ENCODE measurements at regions of chr2 and their contacts with region 1.

Region 1: DNA sequence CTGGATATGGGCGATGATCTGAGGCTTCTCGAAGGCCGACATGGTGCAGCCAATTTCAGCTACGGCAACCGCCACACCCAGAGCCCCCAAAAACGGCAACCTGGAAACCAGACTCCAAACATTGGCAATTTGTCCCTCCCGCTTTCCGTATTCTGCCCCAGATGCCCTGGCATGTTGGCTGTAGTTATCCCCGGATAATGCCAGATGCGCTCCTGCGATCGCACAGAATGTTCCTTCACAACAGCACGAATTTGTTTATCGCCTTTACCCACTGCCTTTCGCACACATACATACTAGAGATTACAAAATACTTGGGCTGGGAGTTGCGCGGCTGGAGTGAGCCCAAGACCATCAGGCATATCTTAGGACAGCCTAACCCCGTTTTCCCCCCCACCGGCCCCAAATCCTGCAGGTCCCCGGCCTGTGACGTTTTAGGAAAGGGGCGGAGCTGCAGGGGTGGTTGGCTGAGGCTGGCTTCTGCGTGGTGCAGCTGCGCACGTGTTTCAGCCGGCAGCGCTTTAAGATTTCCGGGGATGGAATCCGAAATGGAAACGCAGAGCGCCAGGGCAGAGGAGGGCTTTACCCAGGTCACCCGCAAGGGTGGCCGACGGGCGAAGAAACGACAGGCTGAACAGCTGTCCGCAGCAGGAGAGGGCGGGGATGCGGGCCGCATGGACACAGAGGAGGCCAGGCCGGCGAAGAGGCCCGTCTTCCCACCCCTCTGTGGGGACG is at the start of gene PNO1:
- DNase-seq: peak; percentile 96
- H3K4me3 Mint-ChIP-seq: peak within 1 kb of the TSS; percentile 90
- H3K27ac Mint-ChIP-seq: peak within 1 kb of the TSS; percentile 100
- H3K4me1 Mint-ChIP-seq: peaks cover 37% of the 10 kb centered on the region
- H3K27me3 Mint-ChIP-seq: no peaks in the 10 kb centered on the region
- total RNA-seq, gene PNO1: 31.3 and 33.4 TPM in 2 replicates

Region 2: DNA sequence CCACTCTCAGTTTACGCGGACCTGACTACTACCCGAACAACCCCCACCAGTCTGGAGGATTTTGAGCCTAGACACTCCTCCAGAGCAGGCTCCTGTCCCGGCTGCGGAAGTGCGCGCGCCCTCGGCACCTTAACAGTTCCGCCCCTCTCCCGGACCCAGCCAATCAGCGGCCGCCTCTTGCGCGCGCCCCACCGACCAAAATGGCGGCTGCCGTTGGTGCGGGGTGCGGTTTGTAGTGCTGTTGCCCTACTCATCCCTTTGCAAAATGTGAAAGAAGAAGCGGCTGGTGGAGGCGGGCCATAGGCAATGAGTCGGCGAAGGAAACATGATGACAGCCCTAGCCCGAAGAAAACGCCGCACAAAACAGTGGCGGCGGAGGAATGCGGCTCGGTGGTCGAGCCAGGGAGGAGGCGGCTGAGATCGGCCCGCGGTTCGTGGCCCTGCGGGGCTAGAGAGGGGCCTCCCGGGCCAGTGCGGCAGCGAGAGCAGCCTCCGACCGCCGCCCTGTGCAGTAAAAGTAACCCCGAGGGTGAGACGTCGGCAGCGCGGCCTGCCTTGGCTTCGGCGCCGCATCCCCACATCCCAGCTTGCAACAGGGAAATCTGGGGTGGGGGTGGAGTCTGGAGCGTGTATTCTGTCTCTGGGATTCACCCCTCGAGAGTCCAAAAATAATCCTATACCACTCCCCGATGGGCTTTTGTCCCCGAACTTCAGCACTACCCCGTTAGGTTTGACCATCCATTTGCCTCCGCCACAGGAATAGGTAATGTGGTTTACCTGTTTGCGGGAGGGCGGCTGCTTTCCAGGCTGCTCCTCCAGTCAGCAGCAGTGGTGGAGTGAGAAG is 760.2 kb before region 1 on chr2 and contains the start of gene ETAA1:
- intact Hi-C with region 1: loop called (anchors 1 kb)
- DNase-seq: peak; percentile 90
- H3K4me3 Mint-ChIP-seq: peak within 1 kb of the TSS; percentile 97
- H3K27ac Mint-ChIP-seq: peak within 1 kb of the TSS; percentile 99
- H3K4me1 Mint-ChIP-seq: peaks cover 17% of the 10 kb centered on the region
- H3K27me3 Mint-ChIP-seq: peaks cover 2% of the 10 kb centered on the region
- total RNA-seq, gene ETAA1: 9.5 and 10.7 TPM in 2 replicates

Region 3: DNA sequence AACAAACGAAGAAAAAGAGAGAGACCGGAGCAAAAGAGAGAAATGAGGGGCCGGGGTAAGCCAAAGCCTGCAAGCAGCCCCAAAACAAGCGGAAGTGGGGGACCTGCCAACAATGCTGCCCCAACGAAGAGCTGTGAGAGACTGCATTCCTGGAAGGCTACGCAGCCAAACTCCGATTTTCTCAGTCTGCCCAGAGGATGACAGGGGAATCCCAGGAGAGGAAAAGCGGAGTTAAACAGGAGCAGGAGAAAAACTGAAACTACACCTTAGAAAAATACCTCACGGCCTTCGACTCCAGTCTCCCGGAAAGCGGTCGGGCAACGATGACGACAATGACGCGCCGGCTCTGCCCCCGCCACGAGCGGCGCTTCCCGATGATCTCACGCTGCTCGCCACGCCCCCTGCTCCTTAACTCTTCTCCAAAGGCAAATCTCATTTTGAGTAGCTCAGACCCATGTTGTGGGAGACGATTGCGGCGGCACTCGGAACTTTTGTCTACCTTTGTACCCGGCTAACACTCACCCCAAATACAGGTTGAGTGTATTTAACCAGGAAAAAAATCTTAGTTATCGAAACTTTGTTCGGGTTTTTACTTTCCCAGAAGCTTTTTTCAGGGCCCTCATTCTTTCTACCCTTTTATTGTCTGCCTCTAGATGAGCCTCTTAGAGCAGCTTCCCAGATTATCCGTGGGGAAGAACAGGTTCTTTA is 94.7 kb before region 1 on chr2 and contains the start of gene C1D:
- intact Hi-C with region 1: loop called (anchors 1 kb)
- DNase-seq: peak; percentile 90
- H3K4me3 Mint-ChIP-seq: peak within 1 kb of the TSS; percentile 93
- H3K27ac Mint-ChIP-seq: peak within 1 kb of the TSS; percentile 96
- H3K4me1 Mint-ChIP-seq: peaks cover 35% of the 10 kb centered on the region
- H3K27me3 Mint-ChIP-seq: peaks cover 10% of the 10 kb centered on the region
- total RNA-seq, gene C1D: 28.3 and 31.0 TPM in 2 replicates

Region 4: GRCh38 chr2:68169297-68169696 is 11.7 kb after region 1 on chr2:
- intact Hi-C with region 1: no loop called
- DNase-seq: no peak
- H3K4me3 Mint-ChIP-seq: no peak overlapping the region
- H3K27ac Mint-ChIP-seq: no peak overlapping the region
- H3K4me1 Mint-ChIP-seq: peaks cover 15% of the 10 kb centered on the region
- H3K27me3 Mint-ChIP-seq: no peaks in the 10 kb centered on the region

Region 5: DNA sequence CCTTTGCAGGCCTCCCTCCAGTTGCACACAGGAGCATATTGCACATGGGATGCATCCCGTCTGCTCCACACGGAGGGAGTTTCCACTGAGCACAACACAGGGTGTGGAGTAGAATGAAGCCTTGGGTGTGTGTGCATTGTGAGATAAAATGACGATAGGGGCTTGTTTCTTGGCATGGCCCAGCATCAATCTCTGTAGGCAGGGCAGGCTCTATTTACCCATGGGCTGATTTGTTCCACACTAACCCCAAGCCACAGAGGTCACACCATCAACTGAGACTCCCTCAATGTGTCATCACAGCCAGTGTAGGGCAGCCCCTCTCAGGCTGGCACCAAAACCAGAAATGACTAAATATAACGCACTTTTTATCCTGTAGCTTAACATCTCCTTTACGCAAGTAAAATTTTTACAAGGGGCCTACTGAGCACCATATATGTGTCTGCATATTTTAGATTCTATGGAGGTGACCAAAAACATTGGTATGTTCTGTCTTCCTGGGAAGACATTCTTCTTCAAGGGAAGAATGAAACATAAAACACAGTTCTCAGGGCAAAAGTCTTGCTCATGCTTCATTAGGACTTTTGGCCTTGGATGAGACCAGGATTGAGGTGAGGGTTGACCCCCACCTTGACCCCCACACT is 814.1 kb after region 1 on chr2:
- intact Hi-C with region 1: no loop called
- DNase-seq: no peak
- H3K4me3 Mint-ChIP-seq: no peak overlapping the region
- H3K27ac Mint-ChIP-seq: no peak overlapping the region
- H3K4me1 Mint-ChIP-seq: no peaks in the 10 kb centered on the region
- H3K27me3 Mint-ChIP-seq: peaks cover 16% of the 10 kb centered on the region